MCF 10A (cell line): ENCODE measurements at regions of chr1 and their contacts with region 1.

Region 1: DNA sequence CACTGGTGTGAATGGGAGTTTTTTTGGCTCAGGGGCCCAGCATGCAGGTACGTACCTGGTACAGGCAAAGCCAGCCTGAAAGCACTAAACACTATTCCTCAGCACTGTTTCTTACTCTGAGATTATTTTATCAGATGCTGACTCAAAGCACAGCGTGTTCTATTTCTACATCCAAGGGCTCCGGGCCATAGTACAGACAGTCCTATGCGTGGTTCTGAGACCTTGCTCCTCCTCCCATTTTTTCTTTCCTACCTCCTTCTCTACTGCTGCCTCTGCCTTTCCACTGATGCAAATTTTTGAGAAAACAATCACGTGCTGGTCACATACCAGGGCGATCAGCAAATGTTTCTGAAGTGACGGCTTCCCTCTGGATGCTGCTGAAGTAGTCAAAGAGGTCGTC is 36.3 kb downstream of the PDPN start:
- DNase-seq: peak; percentile 89
- H3K4me3 Mint-ChIP-seq: peak overlapping the region; percentile 26
- H3K27ac Mint-ChIP-seq: peak overlapping the region; percentile 97
- H3K4me1 Mint-ChIP-seq: peaks cover 54% of the 10 kb centered on the region
- H3K27me3 Mint-ChIP-seq: no peaks in the 10 kb centered on the region
- CTCF ChIP-seq: no peak

Region 2: GRCh38 chr1:13583966-13584791 is 35.7 kb before region 1 on chr1:
- CTCF ChIA-PET with region 1: no interaction called
- POLR2A ChIA-PET with region 1: interaction called, 63 read pairs
- intact Hi-C with region 1: loop called (anchors 1 kb)
- DNase-seq: peak; percentile 52
- H3K4me3 Mint-ChIP-seq: peak overlapping the region; percentile 85
- H3K27ac Mint-ChIP-seq: peak overlapping the region; percentile 89
- H3K4me1 Mint-ChIP-seq: peaks cover 15% of the 10 kb centered on the region
- H3K27me3 Mint-ChIP-seq: no peaks in the 10 kb centered on the region
- CTCF ChIP-seq: no peak

Region 3: DNA sequence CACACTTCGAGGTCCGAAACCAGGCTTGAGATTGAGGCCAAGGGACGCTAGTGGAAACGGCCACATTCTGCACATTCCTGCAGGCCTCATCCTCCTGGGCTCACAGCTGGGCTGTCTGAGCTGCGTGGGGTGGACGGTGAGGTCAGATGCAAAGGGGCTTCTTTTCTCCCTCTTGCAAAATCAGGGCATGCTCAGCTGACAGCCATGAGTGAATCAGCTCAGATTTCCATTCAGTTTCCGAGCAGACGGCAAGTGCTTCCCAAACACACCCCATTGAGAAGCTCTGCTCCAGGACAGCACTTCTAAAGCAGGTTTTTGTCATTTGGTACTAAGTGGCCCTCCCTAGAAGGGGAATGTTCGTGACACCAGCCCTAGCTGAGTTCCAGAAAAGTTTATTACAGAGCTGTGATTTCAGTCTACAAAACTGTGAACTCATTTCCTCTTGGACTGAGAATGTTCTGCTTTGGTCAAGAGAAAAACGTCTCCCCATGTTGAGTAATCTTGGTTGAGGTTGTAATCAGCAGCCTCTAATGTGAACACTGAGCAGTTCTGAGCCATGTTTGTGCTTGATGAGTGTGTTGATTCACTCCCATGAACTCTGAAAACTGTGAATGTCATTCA is 26.3 kb before region 1 on chr1:
- CTCF ChIA-PET with region 1: no interaction called
- POLR2A ChIA-PET with region 1: interaction called, 253 read pairs
- intact Hi-C with region 1: no loop called
- DNase-seq: peak; percentile 83
- H3K4me3 Mint-ChIP-seq: peak overlapping the region; percentile 38
- H3K27ac Mint-ChIP-seq: peak overlapping the region; percentile 87
- H3K4me1 Mint-ChIP-seq: peaks cover 61% of the 10 kb centered on the region
- H3K27me3 Mint-ChIP-seq: no peaks in the 10 kb centered on the region
- CTCF ChIP-seq: no peak

Region 4: DNA sequence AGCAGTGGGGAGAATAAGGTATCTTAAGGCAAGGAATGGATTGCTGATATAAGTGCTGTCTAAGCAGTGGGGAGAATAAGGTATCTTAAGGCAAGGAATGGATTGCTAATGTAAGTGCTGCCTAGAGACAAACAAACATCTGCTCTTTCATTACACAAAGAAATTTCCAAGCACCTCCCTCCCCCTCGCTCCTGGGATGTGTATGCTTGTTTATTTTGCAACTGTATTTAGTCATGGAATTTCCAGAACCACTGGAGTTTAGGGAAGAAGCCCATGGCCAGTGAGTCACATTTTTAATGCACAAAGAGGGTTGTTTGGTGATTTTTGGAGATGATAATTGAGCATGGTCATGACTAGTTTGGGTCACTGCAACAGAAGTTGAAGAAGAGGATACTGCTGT is 14.8 kb before region 1 on chr1:
- CTCF ChIA-PET with region 1: interaction called, 5 read pairs
- POLR2A ChIA-PET with region 1: interaction called, 253 read pairs
- intact Hi-C with region 1: no loop called
- DNase-seq: peak; percentile 94
- H3K4me3 Mint-ChIP-seq: no peak overlapping the region
- H3K27ac Mint-ChIP-seq: peak overlapping the region; percentile 81
- H3K4me1 Mint-ChIP-seq: peaks cover 38% of the 10 kb centered on the region
- H3K27me3 Mint-ChIP-seq: no peaks in the 10 kb centered on the region
- CTCF ChIP-seq: no peak

Region 5: GRCh38 chr1:13642306-13643004 is 22.5 kb after region 1 on chr1:
- CTCF ChIA-PET with region 1: no interaction called
- POLR2A ChIA-PET with region 1: interaction called, 16 read pairs
- intact Hi-C with region 1: no loop called
- DNase-seq: no peak
- H3K4me3 Mint-ChIP-seq: no peak overlapping the region
- H3K27ac Mint-ChIP-seq: peak overlapping the region; percentile 20
- H3K4me1 Mint-ChIP-seq: peaks cover 11% of the 10 kb centered on the region
- H3K27me3 Mint-ChIP-seq: no peaks in the 10 kb centered on the region
- CTCF ChIP-seq: no peak